Caco-2 (cell line): ENCODE measurements at regions of chr10 and their contacts with region 1.

Region 1: DNA sequence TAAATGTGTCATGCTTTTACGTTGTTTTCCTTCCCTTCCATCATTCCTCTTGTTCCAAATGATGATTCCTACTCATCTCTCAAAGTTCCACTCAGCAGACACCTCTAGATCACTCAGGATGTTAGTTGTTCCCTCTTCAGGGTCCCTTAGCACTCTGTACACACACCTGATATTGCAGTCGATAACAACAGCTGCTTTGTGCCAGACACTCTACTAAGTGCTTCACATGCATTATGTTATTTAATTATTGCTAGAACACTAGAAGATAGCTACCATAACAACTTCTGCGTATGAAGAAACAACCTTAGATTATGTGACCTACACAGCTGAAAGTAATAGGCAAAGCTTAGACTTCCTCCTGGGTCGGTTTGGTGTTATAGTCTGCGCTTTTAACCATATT is 29.6 kb downstream of the PCBD1 start:
- DNase-seq: no peak
- H3K4me3 ChIP-seq: no peak overlapping the region
- H3K4me3 Mint-ChIP-seq: no peak overlapping the region
- H3K27ac Mint-ChIP-seq: no peak overlapping the region
- H3K4me1 ChIP-seq: peaks cover 16% of the 10 kb centered on the region
- H3K4me1 Mint-ChIP-seq: peaks cover 22% of the 10 kb centered on the region
- H3K27me3 ChIP-seq: no peaks in the 10 kb centered on the region
- H3K27me3 Mint-ChIP-seq: no peaks in the 10 kb centered on the region
- CTCF ChIP-seq: no peak

Region 2: GRCh38 chr10:70830164-70830563 is 28.6 kb before region 1 on chr10:
- CTCF ChIA-PET with region 1: no interaction called
- POLR2A ChIA-PET with region 1: no interaction called
- intact Hi-C with region 1: no loop called
- DNase-seq: no peak
- H3K4me3 ChIP-seq: no peak overlapping the region
- H3K4me3 Mint-ChIP-seq: peak overlapping the region; percentile 9
- H3K27ac Mint-ChIP-seq: no peak overlapping the region
- H3K4me1 ChIP-seq: peaks cover 46% of the 10 kb centered on the region
- H3K4me1 Mint-ChIP-seq: peaks cover 42% of the 10 kb centered on the region
- H3K27me3 ChIP-seq: no peaks in the 10 kb centered on the region
- H3K27me3 Mint-ChIP-seq: no peaks in the 10 kb centered on the region
- CTCF ChIP-seq: no peak

Region 3: DNA sequence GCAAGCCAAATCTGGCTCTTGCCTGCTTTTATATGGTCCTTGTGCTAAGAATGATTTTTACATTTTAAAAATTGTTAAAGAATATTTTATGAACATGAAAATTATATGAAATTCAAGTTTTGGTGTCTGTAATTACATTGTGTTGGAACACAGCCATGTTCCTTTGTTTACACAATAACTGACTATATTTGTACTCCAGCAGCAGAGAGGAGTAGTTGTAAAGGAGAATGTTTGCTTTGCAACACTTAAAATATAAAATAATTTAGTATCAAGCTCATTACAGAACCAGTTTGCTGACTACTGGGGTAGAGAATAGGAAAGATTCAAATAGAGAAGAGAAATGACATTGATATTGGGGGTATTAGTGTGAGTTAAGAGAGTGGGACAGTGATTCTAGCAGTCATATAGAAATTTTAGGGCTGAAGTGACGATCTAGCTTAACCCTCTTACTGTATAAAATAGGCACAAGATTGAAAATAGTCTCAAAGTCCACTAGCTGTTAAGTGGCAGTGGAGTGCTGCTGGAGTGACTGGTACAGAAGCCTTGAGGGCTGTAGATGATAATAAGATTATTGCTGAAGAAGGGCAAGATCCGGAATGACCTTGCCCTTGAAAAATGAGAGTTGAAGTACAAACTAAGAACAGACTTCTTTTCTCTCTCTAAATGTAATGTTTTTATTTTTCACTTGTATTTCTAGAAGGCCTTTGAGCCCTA is 14.8 kb before region 1 on chr10:
- CTCF ChIA-PET with region 1: no interaction called
- POLR2A ChIA-PET with region 1: interaction called, 3 read pairs
- intact Hi-C with region 1: loop called (anchors 2 kb)
- DNase-seq: no peak
- H3K4me3 ChIP-seq: no peak overlapping the region
- H3K4me3 Mint-ChIP-seq: no peak overlapping the region
- H3K27ac Mint-ChIP-seq: peak overlapping the region; percentile 70
- H3K4me1 ChIP-seq: peaks cover 54% of the 10 kb centered on the region
- H3K4me1 Mint-ChIP-seq: peaks cover 51% of the 10 kb centered on the region
- H3K27me3 ChIP-seq: no peaks in the 10 kb centered on the region
- H3K27me3 Mint-ChIP-seq: no peaks in the 10 kb centered on the region
- CTCF ChIP-seq: no peak